ENCODE measurements at regions of chr2 and their contacts with region 1.

Region 1: GRCh38 chr2:176554101-176555048 is 285.1 kb downstream of the MTX2 start:
- DNase-seq: peak; percentile 49
- ATAC-seq: peak; percentile 65
- H3K4me3 Mint-ChIP-seq: peak overlapping the region; percentile 77
- H3K27ac Mint-ChIP-seq: peak overlapping the region; percentile 67
- H3K4me1 Mint-ChIP-seq: peaks cover 7% of the 10 kb centered on the region
- H3K27me3 Mint-ChIP-seq: peaks cover 46% of the 10 kb centered on the region
- CTCF ChIP-seq: peak; percentile 85

Region 2: DNA sequence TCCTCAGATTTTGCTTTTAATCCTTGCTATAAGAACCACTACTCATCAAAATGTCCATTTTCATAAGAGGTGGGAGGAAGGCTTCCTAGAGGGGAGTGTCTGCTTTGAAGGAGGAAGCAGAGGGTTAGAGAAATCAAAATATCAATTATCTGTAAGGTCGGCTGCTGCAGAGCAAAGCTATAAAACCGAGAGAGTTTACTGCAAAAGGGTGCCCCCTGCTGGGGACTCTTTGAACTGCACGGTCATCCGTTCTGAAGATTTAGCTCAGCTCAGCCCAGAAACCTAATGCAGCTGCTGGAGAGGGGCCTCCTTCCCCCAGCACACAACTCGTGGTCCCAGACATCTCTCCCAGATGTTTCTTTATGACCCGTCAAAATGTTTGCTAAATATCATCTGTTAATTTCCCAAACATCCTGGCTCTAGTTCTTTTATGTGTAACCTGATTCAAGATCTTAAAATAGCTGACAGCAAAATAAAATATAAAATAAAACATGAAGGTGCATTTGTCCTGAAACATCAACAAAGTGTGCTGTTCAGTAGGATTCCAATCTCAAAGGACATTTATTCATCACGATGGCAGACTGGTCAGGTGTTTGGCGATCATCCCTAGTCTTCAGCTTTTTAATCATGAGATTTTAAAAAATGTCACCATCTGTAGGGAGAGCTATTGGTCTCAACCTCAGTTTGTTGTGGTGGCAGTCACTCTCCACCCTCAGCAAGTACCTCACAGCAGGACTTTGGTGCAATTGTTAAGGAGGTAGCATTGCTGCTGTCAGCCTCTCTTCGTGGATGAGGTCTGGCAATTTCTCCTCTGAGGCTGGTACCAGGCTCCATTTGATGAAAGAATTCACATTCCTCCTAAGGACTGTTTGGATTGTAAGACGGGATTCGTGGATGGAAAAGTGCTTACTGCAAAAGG is 99.2 kb before region 1 on chr2:
- CTCF ChIA-PET with region 1: interaction called, 32 read pairs
- POLR2A ChIA-PET with region 1: no interaction called
- intact Hi-C with region 1: no loop called
- DNase-seq: peak; percentile 94
- ATAC-seq: peak; percentile 83
- H3K4me3 Mint-ChIP-seq: no peak overlapping the region
- H3K27ac Mint-ChIP-seq: no peak overlapping the region
- H3K4me1 Mint-ChIP-seq: peaks cover 2% of the 10 kb centered on the region
- H3K27me3 Mint-ChIP-seq: peaks cover 25% of the 10 kb centered on the region
- CTCF ChIP-seq: peak; percentile 85

Region 3: DNA sequence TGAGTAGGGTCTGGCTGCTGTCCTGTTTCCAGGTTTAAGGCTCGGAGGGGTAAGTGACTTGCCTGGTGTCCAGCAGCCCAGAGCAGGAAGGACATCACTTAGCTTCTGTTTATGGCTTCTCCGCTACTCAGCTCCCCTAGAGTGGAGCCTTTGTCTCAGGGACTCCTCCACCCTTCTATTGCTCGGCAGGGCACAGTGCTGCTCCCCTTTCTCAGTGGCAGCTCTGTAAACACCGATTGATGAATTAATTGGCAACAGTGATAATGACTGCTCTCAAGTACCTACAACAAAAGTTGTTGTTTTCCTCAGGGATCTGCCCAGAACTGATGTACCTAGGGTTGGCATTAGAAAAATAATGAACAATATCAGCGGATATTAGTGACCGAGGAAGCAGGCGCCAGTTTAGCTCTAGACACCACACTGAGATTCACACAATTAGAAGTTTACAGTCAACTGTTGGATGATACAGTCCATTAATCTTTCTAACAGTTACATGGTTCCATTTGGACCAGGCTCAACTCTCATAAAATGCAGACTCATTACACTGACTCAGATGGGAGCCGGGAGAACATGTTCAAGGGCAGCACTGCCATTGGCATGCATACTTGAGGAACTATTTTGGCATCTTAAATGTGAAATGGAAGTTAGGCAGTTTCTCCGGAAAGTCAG is 19.4 kb before region 1 on chr2:
- CTCF ChIA-PET with region 1: interaction called, 10 read pairs
- POLR2A ChIA-PET with region 1: interaction called, 3 read pairs
- intact Hi-C with region 1: no loop called
- DNase-seq: no peak
- ATAC-seq: no peak
- H3K4me3 Mint-ChIP-seq: no peak overlapping the region
- H3K27ac Mint-ChIP-seq: no peak overlapping the region
- H3K4me1 Mint-ChIP-seq: no peaks in the 10 kb centered on the region
- H3K27me3 Mint-ChIP-seq: peaks cover 8% of the 10 kb centered on the region
- CTCF ChIP-seq: no peak

Region 4: GRCh38 chr2:176574484-176575236 is 20.3 kb after region 1 on chr2:
- CTCF ChIA-PET with region 1: interaction called, 21 read pairs
- POLR2A ChIA-PET with region 1: no interaction called
- intact Hi-C with region 1: no loop called
- DNase-seq: no peak
- ATAC-seq: no peak
- H3K4me3 Mint-ChIP-seq: no peak overlapping the region
- H3K27ac Mint-ChIP-seq: no peak overlapping the region
- H3K4me1 Mint-ChIP-seq: no peaks in the 10 kb centered on the region
- H3K27me3 Mint-ChIP-seq: peaks cover 25% of the 10 kb centered on the region
- CTCF ChIP-seq: no peak

Region 5: GRCh38 chr2:176638167-176639015 is 84.0 kb after region 1 on chr2:
- CTCF ChIA-PET with region 1: interaction called, 13 read pairs
- POLR2A ChIA-PET with region 1: no interaction called
- intact Hi-C with region 1: no loop called
- DNase-seq: peak; percentile 71
- ATAC-seq: peak; percentile 87
- H3K4me3 Mint-ChIP-seq: peak overlapping the region; percentile 60
- H3K27ac Mint-ChIP-seq: no peak overlapping the region
- H3K4me1 Mint-ChIP-seq: peaks cover 6% of the 10 kb centered on the region
- H3K27me3 Mint-ChIP-seq: peaks cover 52% of the 10 kb centered on the region
- CTCF ChIP-seq: peak; percentile 85

Measured in activated CD8-positive, alpha-beta T cell treated with anti-CD3 and anti-CD28 coated beads for 36 hours (primary cell).